Panc1 (cell line): ENCODE measurements at regions of chr17 and their contacts with region 1.

Region 1: GRCh38 chr17:45148183-45149036 is at the start of gene HEXIM1:
- DNase-seq: peak; percentile 93
- ATAC-seq: peak; percentile 88
- H3K4me3 ChIP-seq: peak within 1 kb of the TSS; percentile 77 to 93
- H3K27ac ChIP-seq: peak within 1 kb of the TSS; percentile 100
- H3K4me1 ChIP-seq: peaks cover 10% of the 10 kb centered on the region
- H3K27me3 ChIP-seq: no peaks in the 10 kb centered on the region
- CTCF ChIP-seq: no peak
- total RNA-seq, gene HEXIM1: 59.1 TPM

Region 2: DNA sequence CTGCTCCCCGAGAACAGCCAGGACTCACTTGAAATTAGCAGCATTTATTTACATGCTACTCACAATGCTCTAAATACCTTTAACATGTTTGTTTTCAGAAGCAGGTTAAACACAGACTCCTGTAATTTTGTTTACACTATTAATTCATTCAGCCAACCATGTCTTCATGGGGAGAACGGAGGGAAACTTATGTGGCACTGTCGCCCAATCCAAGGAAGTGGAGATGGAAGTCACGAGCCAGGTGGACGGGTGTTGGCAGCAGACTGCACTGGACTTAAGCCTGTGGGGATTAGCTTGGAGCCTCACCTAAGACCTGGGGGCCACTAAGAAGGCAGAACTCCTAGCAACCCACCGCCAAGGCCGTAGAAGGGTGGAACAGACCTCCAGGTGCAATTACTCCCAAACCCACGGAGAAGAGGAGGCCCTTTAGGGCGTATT is 224.3 kb before region 1 on chr17:
- CTCF ChIA-PET with region 1: no interaction called
- POLR2A ChIA-PET with region 1: no interaction called
- in situ Hi-C with region 1: no loop called
- intact Hi-C with region 1: no loop called
- DNase-seq: no peak
- ATAC-seq: no peak; the same call in 1 of the 2 replicates
- H3K4me3 ChIP-seq: no peak overlapping the region
- H3K27ac ChIP-seq: no peak overlapping the region
- H3K4me1 ChIP-seq: no peaks in the 10 kb centered on the region
- H3K27me3 ChIP-seq: no peaks in the 10 kb centered on the region
- CTCF ChIP-seq: no peak

Region 3: GRCh38 chr17:45063198-45063597 is 85.2 kb before region 1 on chr17:
- CTCF ChIA-PET with region 1: no interaction called
- POLR2A ChIA-PET with region 1: interaction called, 10 read pairs
- in situ Hi-C with region 1: no loop called
- intact Hi-C with region 1: no loop called
- DNase-seq: no peak
- ATAC-seq: no peak
- H3K4me3 ChIP-seq: no peak overlapping the region
- H3K27ac ChIP-seq: no peak overlapping the region
- H3K4me1 ChIP-seq: peaks cover 18% of the 10 kb centered on the region
- H3K27me3 ChIP-seq: no peaks in the 10 kb centered on the region
- CTCF ChIP-seq: no peak

Region 4: GRCh38 chr17:45135192-45135977 is 13.0 kb before region 1 on chr17 and contains the start of gene ACBD4:
- CTCF ChIA-PET with region 1: interaction called, 31 read pairs
- POLR2A ChIA-PET with region 1: interaction called, 5 read pairs
- in situ Hi-C with region 1: no loop called
- intact Hi-C with region 1: no loop called
- DNase-seq: peak; percentile 83
- ATAC-seq: peak; percentile 76
- H3K4me3 ChIP-seq: peak within 1 kb of the TSS; percentile 59 to 67
- H3K27ac ChIP-seq: peak within 1 kb of the TSS; percentile 80
- H3K4me1 ChIP-seq: peaks cover 14% of the 10 kb centered on the region; the same call in 1 of the 2 replicates
- H3K27me3 ChIP-seq: no peaks in the 10 kb centered on the region
- CTCF ChIP-seq: peak; percentile 99
- total RNA-seq, gene ACBD4: 7.7 TPM

Region 5: GRCh38 chr17:45161019-45161825 is 12.8 kb after region 1 on chr17:
- CTCF ChIA-PET with region 1: interaction called, 11 read pairs
- POLR2A ChIA-PET with region 1: interaction called, 10 read pairs
- in situ Hi-C with region 1: no loop called
- intact Hi-C with region 1: no loop called
- DNase-seq: peak; percentile 95
- ATAC-seq: peak; percentile 97
- H3K4me3 ChIP-seq: peak overlapping the region; percentile 70 to 73
- H3K27ac ChIP-seq: peak overlapping the region; percentile 97
- H3K4me1 ChIP-seq: peaks cover 24% of the 10 kb centered on the region
- H3K27me3 ChIP-seq: no peaks in the 10 kb centered on the region
- CTCF ChIP-seq: no peak

Region 6: GRCh38 chr17:45197555-45198334 is 49.3 kb after region 1 on chr17:
- CTCF ChIA-PET with region 1: interaction called, 40 read pairs
- POLR2A ChIA-PET with region 1: interaction called, 11 read pairs
- in situ Hi-C with region 1: no loop called
- intact Hi-C with region 1: no loop called
- DNase-seq: peak; percentile 61
- ATAC-seq: peak; percentile 100
- H3K4me3 ChIP-seq: peak overlapping the region in 1 of 2 experiments; percentile 32; a peak in 2 of 4 replicates
- H3K27ac ChIP-seq: peak overlapping the region; percentile 88
- H3K4me1 ChIP-seq: peaks cover 18% of the 10 kb centered on the region
- H3K27me3 ChIP-seq: no peaks in the 10 kb centered on the region
- CTCF ChIP-seq: peak; percentile 97

Region 7: GRCh38 chr17:45247429-45248131 is 99.2 kb after region 1 on chr17:
- CTCF ChIA-PET with region 1: no interaction called
- POLR2A ChIA-PET with region 1: no interaction called
- in situ Hi-C with region 1: no loop called
- intact Hi-C with region 1: no loop called
- DNase-seq: peak; percentile 46
- ATAC-seq: peak; percentile 96
- H3K4me3 ChIP-seq: peak overlapping the region; percentile 63 to 64
- H3K27ac ChIP-seq: peak overlapping the region; percentile 84
- H3K4me1 ChIP-seq: peaks cover 10% of the 10 kb centered on the region
- H3K27me3 ChIP-seq: no peaks in the 10 kb centered on the region
- CTCF ChIP-seq: no peak